WTC11 (cell line): ENCODE measurements at regions of chr11 and their contacts with region 1.

Region 1: DNA sequence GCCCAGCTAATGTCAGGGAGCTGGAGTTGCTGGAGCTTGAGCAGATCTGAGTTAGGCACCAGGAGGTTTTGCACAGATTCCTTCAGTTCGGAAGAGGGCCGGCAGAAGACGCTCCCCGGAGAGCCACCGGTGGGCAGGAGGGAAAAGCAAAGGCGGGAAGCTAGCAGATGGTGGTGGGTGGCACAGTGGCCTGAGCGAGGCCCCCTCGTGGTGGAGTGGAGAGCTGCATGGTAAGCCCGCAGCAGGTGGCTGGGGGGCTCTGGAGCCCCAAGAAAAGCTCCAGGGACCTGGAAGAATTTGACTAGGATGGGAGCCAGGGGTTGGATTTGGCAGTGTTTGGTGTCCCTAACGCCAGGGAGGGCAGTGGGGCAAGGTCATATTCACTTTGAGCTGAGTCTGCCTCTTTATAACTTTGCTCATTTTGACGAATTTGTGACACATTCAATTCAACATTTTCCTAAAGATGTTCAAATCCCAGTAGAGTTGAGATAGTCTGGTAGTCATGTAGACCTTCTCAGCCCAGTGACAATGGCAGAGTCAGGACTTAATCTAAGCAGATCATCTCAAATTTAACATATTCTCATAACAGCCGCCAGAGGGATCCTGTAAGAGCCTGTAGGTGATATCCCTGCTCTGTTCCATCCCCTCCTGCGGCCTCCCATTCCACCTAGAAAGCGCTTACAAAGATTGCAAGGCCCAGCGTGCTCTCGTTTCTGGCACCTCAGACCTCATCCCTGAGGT is 58.0 kb downstream of the TRIM29 start:
- DNase-seq: peak; percentile 68
- ATAC-seq: peak; percentile 89
- H3K4me3 Mint-ChIP-seq: no peak overlapping the region
- H3K27ac Mint-ChIP-seq: no peak overlapping the region
- H3K4me1 Mint-ChIP-seq: peaks cover 7% of the 10 kb centered on the region
- H3K27me3 Mint-ChIP-seq: peaks cover 39% of the 10 kb centered on the region
- CTCF ChIP-seq: peak; percentile 81

Region 2: GRCh38 chr11:119509969-119510401 is 569.9 kb before region 1 on chr11:
- CTCF ChIA-PET with region 1: no interaction called
- POLR2A ChIA-PET with region 1: no interaction called
- DNase-seq: no peak
- ATAC-seq: no peak
- H3K4me3 Mint-ChIP-seq: no peak overlapping the region
- H3K27ac Mint-ChIP-seq: no peak overlapping the region
- H3K4me1 Mint-ChIP-seq: peaks cover 8% of the 10 kb centered on the region
- H3K27me3 Mint-ChIP-seq: no peaks in the 10 kb centered on the region
- CTCF ChIP-seq: no peak

Region 3: GRCh38 chr11:119999220-119999619 is 80.7 kb before region 1 on chr11:
- CTCF ChIA-PET with region 1: interaction called, 13 read pairs
- POLR2A ChIA-PET with region 1: no interaction called
- DNase-seq: peak; percentile 41
- ATAC-seq: peak; percentile 61
- H3K4me3 Mint-ChIP-seq: no peak overlapping the region
- H3K27ac Mint-ChIP-seq: no peak overlapping the region
- H3K4me1 Mint-ChIP-seq: peaks cover 26% of the 10 kb centered on the region
- H3K27me3 Mint-ChIP-seq: peaks cover 6% of the 10 kb centered on the region; the same call in 1 of the 2 replicates
- CTCF ChIP-seq: no peak

Region 4: GRCh38 chr11:120024046-120024445 is 55.9 kb before region 1 on chr11:
- CTCF ChIA-PET with region 1: interaction called, 32 read pairs
- POLR2A ChIA-PET with region 1: no interaction called
- DNase-seq: no peak
- ATAC-seq: peak; percentile 42
- H3K4me3 Mint-ChIP-seq: no peak overlapping the region; the same call in 1 of the 2 replicates
- H3K27ac Mint-ChIP-seq: 0 out of 2 replicates have a peak overlapping the region, but pooled peaks have one; percentile 63
- H3K4me1 Mint-ChIP-seq: peaks cover 30% of the 10 kb centered on the region
- H3K27me3 Mint-ChIP-seq: peaks cover 12% of the 10 kb centered on the region
- CTCF ChIP-seq: no peak

Region 5: DNA sequence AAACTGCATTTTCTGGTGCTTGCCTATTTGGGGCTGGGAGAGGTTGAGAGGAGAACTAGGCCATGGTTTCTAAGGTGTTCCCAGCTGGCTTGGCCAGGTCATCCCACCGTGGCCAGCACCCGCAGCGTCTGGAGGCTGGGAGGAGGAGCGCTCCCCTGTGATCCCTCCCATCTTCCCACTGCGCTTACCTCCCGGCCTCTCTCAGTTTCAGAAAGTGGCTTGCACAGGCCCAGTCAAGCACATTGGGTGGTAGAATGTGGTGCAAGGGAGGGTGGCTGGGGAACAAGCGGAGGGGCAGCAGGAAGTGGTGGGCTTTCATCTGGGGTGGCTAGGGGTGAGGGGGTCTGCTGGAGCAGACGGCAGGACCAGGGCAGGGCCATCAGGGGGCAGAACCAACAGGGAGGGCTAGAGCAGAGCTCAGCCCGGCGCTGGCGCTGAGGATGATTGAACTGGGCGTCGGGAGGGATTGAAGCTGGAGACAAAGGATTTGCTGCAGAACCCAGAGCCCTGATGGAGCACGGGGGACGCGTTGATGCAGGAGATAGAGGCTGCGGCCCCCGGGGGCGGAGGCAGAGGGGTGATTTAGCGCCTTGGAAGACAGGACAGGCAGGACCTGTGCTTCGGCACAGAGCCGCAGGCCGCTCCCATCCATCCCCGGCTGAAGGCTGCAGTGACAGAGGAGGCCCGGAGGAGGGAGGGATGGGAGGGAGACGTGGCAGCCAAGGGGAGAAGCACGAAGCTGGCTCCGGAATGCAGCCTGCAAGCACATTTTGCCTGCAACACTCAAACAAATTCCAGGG is 18.0 kb before region 1 on chr11:
- CTCF ChIA-PET with region 1: interaction called, 30 read pairs
- POLR2A ChIA-PET with region 1: no interaction called
- DNase-seq: peak; percentile 57
- ATAC-seq: peak; percentile 49
- H3K4me3 Mint-ChIP-seq: no peak overlapping the region
- H3K27ac Mint-ChIP-seq: no peak overlapping the region
- H3K4me1 Mint-ChIP-seq: peaks cover 52% of the 10 kb centered on the region
- H3K27me3 Mint-ChIP-seq: peaks cover 6% of the 10 kb centered on the region
- CTCF ChIP-seq: no peak

Region 6: GRCh38 chr11:120068114-120068573 is 11.8 kb before region 1 on chr11:
- CTCF ChIA-PET with region 1: interaction called, 11 read pairs
- POLR2A ChIA-PET with region 1: no interaction called
- DNase-seq: no peak
- ATAC-seq: no peak
- H3K4me3 Mint-ChIP-seq: no peak overlapping the region
- H3K27ac Mint-ChIP-seq: no peak overlapping the region
- H3K4me1 Mint-ChIP-seq: peaks cover 11% of the 10 kb centered on the region
- H3K27me3 Mint-ChIP-seq: peaks cover 6% of the 10 kb centered on the region; the same call in 1 of the 2 replicates
- CTCF ChIP-seq: no peak

Region 7: GRCh38 chr11:120096369-120097191 is 16.7 kb after region 1 on chr11:
- CTCF ChIA-PET with region 1: interaction called, 12 read pairs
- POLR2A ChIA-PET with region 1: no interaction called
- DNase-seq: no peak
- ATAC-seq: peak; percentile 65
- H3K4me3 Mint-ChIP-seq: peak overlapping the region; percentile 34; the same call in 1 of the 2 replicates
- H3K27ac Mint-ChIP-seq: no peak overlapping the region
- H3K4me1 Mint-ChIP-seq: peaks cover 21% of the 10 kb centered on the region
- H3K27me3 Mint-ChIP-seq: peaks cover 9% of the 10 kb centered on the region
- CTCF ChIP-seq: no peak

Region 8: GRCh38 chr11:120128782-120129172 is 48.9 kb after region 1 on chr11:
- CTCF ChIA-PET with region 1: no interaction called
- POLR2A ChIA-PET with region 1: no interaction called
- DNase-seq: no peak
- ATAC-seq: no peak
- H3K4me3 Mint-ChIP-seq: no peak overlapping the region
- H3K27ac Mint-ChIP-seq: no peak overlapping the region
- H3K4me1 Mint-ChIP-seq: peaks cover 5% of the 10 kb centered on the region; the same call in 1 of the 2 replicates
- H3K27me3 Mint-ChIP-seq: peaks cover 6% of the 10 kb centered on the region
- CTCF ChIP-seq: no peak